B cell (primary cell): ENCODE measurements at regions of chr16 and their contacts with region 1.

Region 1: GRCh38 chr16:89700100-89700648 is 1.3 kb downstream of the SPATA2L start:
- DNase-seq: peak; percentile 99
- ATAC-seq: peak; percentile 38
- H3K4me3 ChIP-seq: peak overlapping the region; percentile 17 to 73 (median 68)
- H3K4me3 Mint-ChIP-seq: peak overlapping the region; percentile 85
- H3K27ac ChIP-seq: peak overlapping the region; percentile 76 to 82
- H3K27ac Mint-ChIP-seq: peak overlapping the region; percentile 83
- H3K4me1 ChIP-seq: peaks cover 21 to 29% of the 10 kb centered on the region in 2 donors
- H3K4me1 Mint-ChIP-seq: peaks cover 21% of the 10 kb centered on the region
- H3K27me3 ChIP-seq: no peaks in the 10 kb centered on the region
- H3K27me3 Mint-ChIP-seq: no peaks in the 10 kb centered on the region
- CTCF ChIP-seq: peak; percentile 74

Region 2: GRCh38 chr16:89615596-89616090 is 84.5 kb before region 1 on chr16:
- CTCF ChIA-PET with region 1: interaction called, 11 read pairs
- POLR2A ChIA-PET with region 1: no interaction called
- intact Hi-C with region 1: no loop called
- DNase-seq: peak; percentile 59
- ATAC-seq: no peak
- H3K4me3 ChIP-seq: no peak overlapping the region
- H3K4me3 Mint-ChIP-seq: no peak overlapping the region
- H3K27ac ChIP-seq: no peak overlapping the region
- H3K27ac Mint-ChIP-seq: no peak overlapping the region
- H3K4me1 ChIP-seq: peaks cover 0 to 8% of the 10 kb centered on the region in 2 donors
- H3K4me1 Mint-ChIP-seq: peaks cover 9% of the 10 kb centered on the region
- H3K27me3 ChIP-seq: peaks cover 0 to 4% (median 0%) of the 10 kb centered on the region in 4 experiments
- H3K27me3 Mint-ChIP-seq: peaks cover 12% of the 10 kb centered on the region
- CTCF ChIP-seq: peak; percentile 70

Region 3: DNA sequence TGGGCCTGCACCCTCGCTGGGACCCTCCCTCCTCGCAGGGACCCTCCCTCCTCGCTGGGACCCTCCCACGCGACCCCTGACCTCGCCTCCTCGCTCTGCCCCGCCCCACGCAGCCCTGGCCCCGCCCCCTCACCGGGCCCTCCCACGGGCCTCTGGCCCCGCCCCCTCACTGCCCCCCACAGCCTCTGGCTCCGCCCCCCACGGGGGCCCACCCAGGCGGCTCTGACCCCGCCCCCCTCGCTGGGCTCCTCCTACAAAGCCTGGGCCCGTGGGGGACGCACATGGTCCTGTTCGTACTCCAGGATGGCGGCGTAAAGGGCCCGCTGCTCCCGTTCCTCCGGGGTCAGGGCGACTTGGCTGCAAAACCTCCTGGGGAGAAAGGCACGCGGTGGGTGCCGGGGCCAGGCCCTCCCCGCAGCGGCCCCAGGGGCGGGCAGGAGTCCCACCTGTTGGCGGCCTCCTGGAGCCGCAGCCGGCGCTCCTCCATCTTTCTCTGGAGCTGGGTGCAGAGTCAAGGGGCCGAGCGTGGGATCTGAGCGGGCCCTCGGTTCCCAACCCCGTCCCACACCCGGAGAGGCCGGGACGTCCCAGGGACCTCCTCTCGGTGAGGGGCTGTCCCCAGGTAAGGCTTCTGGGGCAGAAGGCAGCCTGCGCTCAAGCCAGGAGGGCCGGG is 11.6 kb after region 1 on chr16:
- CTCF ChIA-PET with region 1: interaction called, 16 read pairs
- POLR2A ChIA-PET with region 1: no interaction called
- intact Hi-C with region 1: loop called (anchors 1 kb)
- DNase-seq: peak; percentile 82
- ATAC-seq: peak; percentile 95
- H3K4me3 ChIP-seq: peak overlapping the region in 4 of 5 experiments; percentile 35 to 67 (median 58)
- H3K4me3 Mint-ChIP-seq: peak overlapping the region; percentile 67
- H3K27ac ChIP-seq: no peak overlapping the region
- H3K27ac Mint-ChIP-seq: no peak overlapping the region
- H3K4me1 ChIP-seq: peaks cover 8 to 11% of the 10 kb centered on the region in 2 donors
- H3K4me1 Mint-ChIP-seq: peaks cover 4% of the 10 kb centered on the region
- H3K27me3 ChIP-seq: no peaks in the 10 kb centered on the region
- H3K27me3 Mint-ChIP-seq: no peaks in the 10 kb centered on the region
- CTCF ChIP-seq: no peak

Region 4: GRCh38 chr16:89775223-89775622 is 75.0 kb after region 1 on chr16:
- CTCF ChIA-PET with region 1: no interaction called
- POLR2A ChIA-PET with region 1: no interaction called
- intact Hi-C with region 1: no loop called
- DNase-seq: no peak
- ATAC-seq: no peak
- H3K4me3 ChIP-seq: no peak overlapping the region
- H3K4me3 Mint-ChIP-seq: no peak overlapping the region
- H3K27ac ChIP-seq: no peak overlapping the region
- H3K27ac Mint-ChIP-seq: no peak overlapping the region
- H3K4me1 ChIP-seq: no peaks in the 10 kb centered on the region
- H3K4me1 Mint-ChIP-seq: no peaks in the 10 kb centered on the region
- H3K27me3 ChIP-seq: no peaks in the 10 kb centered on the region
- H3K27me3 Mint-ChIP-seq: no peaks in the 10 kb centered on the region
- CTCF ChIP-seq: no peak

Region 5: DNA sequence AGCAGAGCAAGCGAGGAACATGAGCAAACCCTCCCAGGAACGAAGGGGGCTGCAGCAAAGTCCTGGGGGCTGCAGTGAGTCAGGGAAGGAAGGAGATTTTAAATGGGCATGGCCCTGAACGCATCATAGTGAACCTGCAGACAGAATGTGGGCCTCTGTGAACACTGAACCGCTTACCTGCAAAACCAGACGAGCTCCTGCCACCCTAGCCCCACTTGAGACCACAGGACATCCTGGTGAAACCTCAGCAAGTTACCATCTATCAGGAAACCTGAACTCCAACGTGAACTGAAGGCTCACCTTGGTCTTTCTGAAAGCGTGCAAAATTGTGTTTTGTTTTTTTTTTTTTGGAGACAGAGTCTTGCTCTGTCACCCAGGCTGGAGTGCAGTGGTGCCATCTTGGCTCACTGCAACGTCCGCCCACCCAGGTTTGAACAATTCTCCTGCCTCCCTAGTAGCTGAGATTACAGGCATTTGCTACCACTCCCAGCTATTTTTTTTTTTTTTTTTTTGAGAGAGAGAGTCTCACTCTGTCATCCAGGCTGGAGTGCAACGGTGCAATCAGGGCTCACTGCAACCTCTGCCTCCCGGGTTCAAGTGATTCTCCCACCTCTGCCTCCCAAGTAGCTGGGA is 85.5 kb after region 1 on chr16:
- CTCF ChIA-PET with region 1: interaction called, 171 read pairs
- POLR2A ChIA-PET with region 1: no interaction called
- intact Hi-C with region 1: no loop called
- DNase-seq: no peak
- ATAC-seq: no peak
- H3K4me3 ChIP-seq: no peak overlapping the region
- H3K4me3 Mint-ChIP-seq: no peak overlapping the region
- H3K27ac ChIP-seq: no peak overlapping the region
- H3K27ac Mint-ChIP-seq: no peak overlapping the region
- H3K4me1 ChIP-seq: no peaks in the 10 kb centered on the region
- H3K4me1 Mint-ChIP-seq: no peaks in the 10 kb centered on the region
- H3K27me3 ChIP-seq: no peaks in the 10 kb centered on the region
- H3K27me3 Mint-ChIP-seq: no peaks in the 10 kb centered on the region
- CTCF ChIP-seq: no peak

Region 6: DNA sequence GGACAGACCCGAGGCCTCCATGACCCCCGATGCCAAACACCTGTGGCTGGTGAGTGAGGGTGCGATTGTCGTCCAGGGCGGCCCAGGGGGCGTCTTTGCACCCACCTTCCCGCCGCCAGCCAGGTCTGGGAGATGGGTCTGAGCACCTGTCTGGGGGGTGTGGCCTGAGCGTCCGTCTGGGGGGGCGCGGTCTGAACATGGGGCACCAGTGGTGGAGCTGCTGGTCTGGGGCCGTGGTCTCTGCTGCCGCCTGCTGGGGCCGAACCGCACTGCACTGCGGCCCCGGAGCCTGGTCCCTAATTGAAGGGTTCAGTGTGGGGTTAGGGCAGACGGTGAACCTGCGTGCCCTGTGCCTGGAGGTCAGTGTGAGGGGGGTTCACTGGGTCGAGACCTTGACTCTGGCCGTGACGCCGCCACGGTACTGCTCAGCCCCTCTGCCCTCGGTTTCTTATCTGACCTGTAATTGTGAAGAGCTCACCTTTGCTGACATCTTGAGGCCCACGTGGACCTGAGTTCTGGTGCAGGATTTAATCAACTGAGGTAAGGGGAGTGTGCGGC is 160.7 kb after region 1 on chr16:
- CTCF ChIA-PET with region 1: interaction called, 105 read pairs
- POLR2A ChIA-PET with region 1: interaction called, 7 read pairs
- intact Hi-C with region 1: loop called (anchors 2 kb)
- DNase-seq: peak; percentile 84
- ATAC-seq: peak; percentile 93
- H3K4me3 ChIP-seq: no peak overlapping the region
- H3K4me3 Mint-ChIP-seq: no peak overlapping the region
- H3K27ac ChIP-seq: no peak overlapping the region
- H3K27ac Mint-ChIP-seq: no peak overlapping the region
- H3K4me1 ChIP-seq: peaks cover 17 to 29% of the 10 kb centered on the region in 2 donors
- H3K4me1 Mint-ChIP-seq: peaks cover 29% of the 10 kb centered on the region
- H3K27me3 ChIP-seq: peaks cover 0 to 4% (median 0%) of the 10 kb centered on the region in 4 experiments
- H3K27me3 Mint-ChIP-seq: no peaks in the 10 kb centered on the region
- CTCF ChIP-seq: peak; percentile 92